Panc1 (cell line): ENCODE measurements at regions of chr2 and their contacts with region 1.

Region 1: DNA sequence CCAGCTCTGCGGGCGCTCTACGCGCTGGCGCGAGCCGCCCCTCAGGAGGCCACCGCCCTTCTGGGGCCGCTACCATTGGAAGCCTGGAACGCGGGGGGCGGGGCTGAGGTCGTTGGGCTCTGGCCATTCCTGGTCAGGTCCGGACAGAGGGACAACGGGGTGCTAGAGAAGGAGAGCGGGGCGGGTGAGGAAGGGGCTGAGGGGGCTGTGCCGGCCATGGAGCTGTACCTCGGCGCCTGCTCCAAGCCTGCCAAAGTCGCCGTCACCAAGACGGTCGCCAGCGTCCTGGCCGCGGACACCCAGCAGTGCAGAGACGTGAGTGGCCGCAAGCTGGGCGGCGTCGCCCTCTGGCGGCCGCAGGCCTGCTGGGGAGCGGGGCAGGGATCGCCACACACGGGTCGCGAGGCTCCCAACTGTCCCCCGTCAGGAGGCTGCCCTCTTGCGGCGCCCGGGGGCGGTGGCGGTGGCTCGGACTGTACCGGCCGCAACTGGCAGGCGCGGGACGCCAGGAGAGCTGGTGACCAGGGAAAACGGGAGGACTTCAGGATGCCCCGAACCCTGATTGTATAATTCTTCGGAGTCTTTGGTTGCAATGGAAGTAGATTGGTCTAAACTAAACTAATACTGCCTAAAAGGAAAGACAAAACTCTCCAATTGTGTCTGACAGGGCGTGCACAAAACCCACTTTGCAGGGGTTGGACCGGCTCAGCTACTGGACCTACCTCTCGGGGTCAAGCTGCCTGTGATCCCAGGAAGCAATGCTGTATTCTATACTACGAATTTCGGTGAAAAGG is at the start of gene FSIP2:
- DNase-seq: no peak
- ATAC-seq: peak; percentile 99
- H3K4me3 ChIP-seq: peak within 1 kb of the TSS; percentile 40 to 46
- H3K27ac ChIP-seq: no peak within 1 kb of the TSS
- H3K4me1 ChIP-seq: no peaks in the 10 kb centered on the region
- H3K27me3 ChIP-seq: no peaks in the 10 kb centered on the region
- CTCF ChIP-seq: peak; percentile 96
- total RNA-seq, gene FSIP2: 0.03 TPM

Region 2: GRCh38 chr2:184611361-184612085 is 1127.4 kb before region 1 on chr2:
- CTCF ChIA-PET with region 1: no interaction called
- POLR2A ChIA-PET with region 1: no interaction called
- in situ Hi-C with region 1: no loop called
- intact Hi-C with region 1: loop called (anchors 10 kb)
- DNase-seq: no peak
- ATAC-seq: no peak
- H3K4me3 ChIP-seq: no peak overlapping the region
- H3K27ac ChIP-seq: no peak overlapping the region
- H3K4me1 ChIP-seq: no peaks in the 10 kb centered on the region
- H3K27me3 ChIP-seq: no peaks in the 10 kb centered on the region
- CTCF ChIP-seq: peak; percentile 51; the same call in 1 of the 2 replicates

Region 3: GRCh38 chr2:185291035-185291647 is 447.7 kb before region 1 on chr2:
- CTCF ChIA-PET with region 1: no interaction called
- POLR2A ChIA-PET with region 1: no interaction called
- in situ Hi-C with region 1: no loop called
- intact Hi-C with region 1: loop called (anchors 2 kb)
- DNase-seq: peak; percentile 12
- ATAC-seq: peak; percentile 94
- H3K4me3 ChIP-seq: no peak overlapping the region
- H3K27ac ChIP-seq: no peak overlapping the region
- H3K4me1 ChIP-seq: no peaks in the 10 kb centered on the region
- H3K27me3 ChIP-seq: no peaks in the 10 kb centered on the region
- CTCF ChIP-seq: peak; percentile 78